Endothelial cell of umbilical vein (primary cell): ENCODE measurements at regions of chr22 and their contacts with region 1.

Region 1: DNA sequence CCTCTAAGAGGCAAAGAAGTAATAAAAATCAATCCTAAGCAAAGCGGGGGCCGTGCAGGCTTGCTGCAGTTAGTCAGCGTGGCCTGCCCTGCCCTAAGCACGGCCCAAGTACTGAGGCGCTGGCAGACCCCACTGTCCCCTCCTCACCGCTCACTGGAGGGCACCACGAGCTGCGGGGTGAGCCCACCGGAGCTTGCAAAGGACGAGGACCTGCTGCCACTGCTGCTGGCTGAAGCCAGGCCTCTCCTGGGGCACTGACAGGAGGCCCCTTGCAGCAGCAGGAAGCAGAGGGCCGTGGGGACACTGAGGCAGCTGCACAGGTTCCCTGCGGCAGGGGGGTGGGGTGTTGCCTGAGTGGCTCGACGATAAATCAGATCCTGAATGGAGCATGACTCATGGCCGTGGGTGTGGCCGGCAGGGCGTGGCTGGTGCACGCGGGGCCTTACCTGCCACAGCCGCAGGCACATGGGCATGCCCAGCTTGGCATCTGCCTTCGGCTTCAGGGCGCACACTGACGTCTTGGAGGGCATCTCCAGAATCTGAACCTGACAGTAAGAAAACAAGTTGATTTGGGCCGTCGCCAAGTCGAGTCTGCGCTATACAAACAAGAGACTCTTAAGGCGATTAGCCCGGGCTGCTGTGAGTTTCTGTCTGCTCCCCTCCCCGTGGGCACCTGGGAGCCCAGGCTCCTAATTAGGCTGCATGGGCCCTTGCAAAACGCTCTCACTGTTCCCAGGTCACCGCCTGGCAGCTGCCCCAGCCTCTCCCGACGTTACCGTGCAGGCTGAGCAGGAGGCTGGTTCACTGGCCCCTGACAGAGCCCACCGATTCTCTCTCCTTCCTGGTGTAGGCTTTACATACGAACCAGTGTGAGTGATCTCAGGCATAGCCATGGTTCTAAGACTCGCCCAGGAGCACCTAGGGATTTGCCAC is 45.9 kb downstream of the TBX1 start:
- DNase-seq: peak; percentile 63
- H3K4me3 ChIP-seq: no peak overlapping the region
- H3K27ac ChIP-seq: peak overlapping the region; percentile 28
- H3K4me1 ChIP-seq: peaks cover 14% of the 10 kb centered on the region
- H3K27me3 ChIP-seq: no peaks in the 10 kb centered on the region
- CTCF ChIP-seq: no peak
- POLR2A ChIP-seq: no peak

Region 2: DNA sequence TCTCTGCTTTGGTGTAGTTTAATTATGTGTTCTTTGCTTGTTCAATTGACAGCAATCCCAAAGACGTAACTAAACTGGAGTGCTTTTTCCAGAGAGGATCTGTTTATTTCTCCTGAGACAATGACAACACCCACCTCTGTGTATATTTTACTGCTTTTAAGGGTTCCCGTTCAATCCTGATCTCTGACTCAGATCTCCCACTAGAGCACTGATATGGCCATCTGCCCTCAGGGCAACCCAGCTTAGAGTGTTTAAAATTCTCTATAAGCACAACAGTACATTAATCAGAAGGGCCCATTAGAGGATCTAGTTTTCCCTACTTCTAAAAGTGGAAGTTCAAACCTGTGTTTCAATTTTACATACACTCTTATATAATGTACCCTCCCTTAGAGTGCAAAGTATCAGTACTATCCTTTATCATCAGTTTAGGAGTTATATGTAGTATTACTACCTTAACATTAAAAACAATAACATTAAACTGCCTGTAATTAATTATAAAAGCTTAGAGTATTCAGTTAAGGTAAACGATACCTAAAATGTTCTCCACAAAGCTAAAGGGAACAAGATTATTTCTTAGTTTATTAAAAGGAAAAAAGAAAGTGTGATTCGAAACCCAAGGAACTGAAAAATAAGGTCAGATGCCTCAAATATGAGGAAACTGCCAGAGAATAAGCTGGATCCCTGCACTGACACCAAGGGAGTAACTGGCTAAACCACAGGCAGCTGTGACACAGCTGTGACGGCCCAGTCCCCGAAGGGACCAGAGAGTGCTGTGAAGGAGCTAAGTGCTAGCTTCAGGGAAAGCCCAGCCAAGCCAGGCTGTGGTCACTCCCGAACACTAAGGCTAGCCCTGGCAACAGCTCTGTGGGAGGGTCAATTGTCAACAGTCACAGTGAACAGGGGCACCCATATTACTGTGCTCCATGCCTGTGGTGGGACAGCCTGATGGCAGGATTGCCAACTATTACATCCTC is 342.7 kb before region 1 on chr22:
- CTCF ChIA-PET with region 1: no interaction called
- POLR2A ChIA-PET with region 1: no interaction called
- dilution Hi-C with region 1: no loop called
- intact Hi-C with region 1: no loop called
- DNase-seq: no peak
- H3K4me3 ChIP-seq: no peak overlapping the region
- H3K27ac ChIP-seq: no peak overlapping the region
- H3K4me1 ChIP-seq: no peaks in the 10 kb centered on the region
- H3K27me3 ChIP-seq: no peaks in the 10 kb centered on the region
- CTCF ChIP-seq: no peak
- POLR2A ChIP-seq: no peak

Region 3: GRCh38 chr22:19554834-19555404 is 251.6 kb before region 1 on chr22:
- CTCF ChIA-PET with region 1: no interaction called
- POLR2A ChIA-PET with region 1: no interaction called
- dilution Hi-C with region 1: no loop called
- intact Hi-C with region 1: no loop called
- DNase-seq: peak; percentile 73
- H3K4me3 ChIP-seq: no peak overlapping the region
- H3K27ac ChIP-seq: no peak overlapping the region
- H3K4me1 ChIP-seq: peaks cover 7% of the 10 kb centered on the region
- H3K27me3 ChIP-seq: no peaks in the 10 kb centered on the region
- CTCF ChIP-seq: peak; percentile 13 to 34
- POLR2A ChIP-seq: no peak

Region 4: DNA sequence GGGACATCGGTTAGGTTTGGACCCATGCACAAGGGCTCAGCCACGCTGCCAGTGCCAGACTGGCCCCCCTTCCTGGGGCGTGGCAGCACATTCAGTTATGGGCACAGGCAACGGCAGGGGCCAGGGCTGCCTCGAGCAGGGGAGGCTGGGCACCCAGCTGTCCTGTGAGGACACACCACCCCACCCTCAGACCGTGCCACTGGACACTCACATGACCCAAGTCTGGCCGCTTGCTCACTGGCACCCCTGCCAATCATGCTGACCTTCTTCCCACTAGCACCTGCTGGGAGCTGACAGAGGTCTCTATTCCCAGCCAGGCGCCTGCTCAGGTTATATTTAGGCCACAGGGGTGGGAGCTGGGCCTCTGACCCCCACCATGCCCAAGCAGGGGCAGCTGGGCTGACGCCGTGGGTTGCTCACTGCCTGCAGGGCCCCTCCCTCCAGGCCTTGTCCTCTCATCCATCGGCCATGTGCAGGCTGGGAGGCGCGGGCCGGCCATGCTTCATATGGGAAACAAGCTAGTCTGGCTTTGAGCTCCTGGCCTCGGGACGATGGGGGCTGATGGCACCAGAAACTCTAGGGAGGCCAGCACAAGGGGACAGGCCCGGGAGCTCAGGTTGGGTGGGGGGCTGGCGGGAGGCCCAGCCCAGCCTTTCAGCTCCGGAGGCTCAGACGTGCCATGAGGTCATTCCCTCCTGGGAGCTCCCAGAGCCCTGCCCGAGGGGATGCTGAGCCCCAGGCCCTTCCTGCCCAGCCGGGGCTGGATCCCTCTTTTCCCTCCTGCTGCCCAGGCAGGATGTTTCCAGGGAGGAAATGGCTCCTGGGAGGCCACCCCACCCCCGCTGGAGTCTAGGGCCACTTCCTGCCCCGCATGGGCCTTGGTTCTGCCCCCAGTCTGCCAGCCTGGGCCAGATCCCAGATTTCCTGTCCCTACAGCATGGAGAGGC is 61.1 kb before region 1 on chr22:
- CTCF ChIA-PET with region 1: no interaction called
- POLR2A ChIA-PET with region 1: no interaction called
- dilution Hi-C with region 1: no loop called
- intact Hi-C with region 1: loop called (anchors 1 kb)
- DNase-seq: no peak
- H3K4me3 ChIP-seq: no peak overlapping the region
- H3K27ac ChIP-seq: no peak overlapping the region
- H3K4me1 ChIP-seq: peaks cover 9% of the 10 kb centered on the region
- H3K27me3 ChIP-seq: no peaks in the 10 kb centered on the region
- CTCF ChIP-seq: no peak
- POLR2A ChIP-seq: no peak

Region 5: GRCh38 chr22:19772422-19773324 is 33.8 kb before region 1 on chr22:
- CTCF ChIA-PET with region 1: no interaction called
- POLR2A ChIA-PET with region 1: no interaction called
- dilution Hi-C with region 1: no loop called
- intact Hi-C with region 1: loop called (anchors 2 kb)
- DNase-seq: peak; percentile 83
- H3K4me3 ChIP-seq: no peak overlapping the region
- H3K27ac ChIP-seq: no peak overlapping the region
- H3K4me1 ChIP-seq: peaks cover 12% of the 10 kb centered on the region
- H3K27me3 ChIP-seq: peaks cover 6 to 9% of the 10 kb centered on the region in 2 experiments
- CTCF ChIP-seq: peak; percentile 15 to 29
- POLR2A ChIP-seq: no peak

Region 6: DNA sequence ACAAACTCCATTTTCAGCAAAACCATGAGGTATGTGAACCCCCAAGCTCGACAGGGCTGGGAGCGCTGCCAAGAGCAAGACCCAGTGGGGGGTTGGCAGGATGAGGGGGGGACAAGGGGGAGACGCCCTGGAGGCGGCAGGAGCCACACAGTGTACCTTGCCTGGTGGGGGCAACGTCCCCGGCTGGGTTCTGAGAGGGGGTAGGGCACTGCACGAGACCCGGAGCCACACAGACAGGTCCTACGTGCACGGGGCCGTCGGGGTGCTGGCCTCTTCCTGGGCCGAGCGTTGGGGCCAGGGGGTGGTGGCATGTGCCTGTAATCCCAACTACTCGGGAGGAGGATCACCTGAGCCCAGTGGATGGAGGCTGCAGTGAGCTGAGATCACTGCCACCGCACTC is 17.1 kb before region 1 on chr22:
- CTCF ChIA-PET with region 1: no interaction called
- POLR2A ChIA-PET with region 1: no interaction called
- dilution Hi-C with region 1: no loop called
- intact Hi-C with region 1: no loop called
- DNase-seq: no peak
- H3K4me3 ChIP-seq: no peak overlapping the region
- H3K27ac ChIP-seq: no peak overlapping the region
- H3K4me1 ChIP-seq: no peaks in the 10 kb centered on the region
- H3K27me3 ChIP-seq: no peaks in the 10 kb centered on the region
- CTCF ChIP-seq: no peak
- POLR2A ChIP-seq: no peak

Region 7: DNA sequence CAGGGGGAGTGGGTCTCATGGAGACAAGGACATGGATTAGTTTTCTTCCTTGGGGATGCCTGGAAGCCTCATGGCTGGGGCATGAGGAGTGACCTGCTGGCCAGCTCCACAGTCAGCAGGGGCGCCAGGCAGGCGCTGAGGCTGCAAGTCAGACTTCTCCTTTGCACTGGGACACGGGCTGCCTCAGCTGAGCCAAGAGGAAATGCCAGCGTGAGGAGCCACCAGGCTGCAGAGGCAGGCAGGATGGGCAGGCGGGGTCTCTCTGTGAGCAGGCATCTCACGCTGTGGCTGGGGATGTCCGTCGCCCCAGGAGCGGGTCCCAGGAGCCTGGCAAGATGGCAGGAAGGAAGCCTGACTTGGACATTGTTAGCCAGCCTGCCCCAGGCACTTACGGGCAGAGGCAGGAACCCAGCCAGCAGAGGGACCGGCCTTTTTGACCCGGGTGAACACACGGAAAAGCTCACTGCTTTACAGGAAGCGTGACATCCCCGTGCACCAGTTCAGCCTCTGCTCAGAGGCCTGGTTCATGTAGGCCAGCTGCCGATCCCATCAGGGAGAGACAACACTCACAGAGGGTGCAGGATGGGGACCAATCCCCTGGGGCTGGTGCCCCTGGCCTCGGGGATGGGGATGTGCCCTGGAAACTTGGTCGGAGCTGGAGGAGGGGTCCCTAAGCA is 38.0 kb after region 1 on chr22:
- CTCF ChIA-PET with region 1: no interaction called
- POLR2A ChIA-PET with region 1: no interaction called
- dilution Hi-C with region 1: no loop called
- intact Hi-C with region 1: loop called (anchors 2 kb)
- DNase-seq: peak; percentile 77
- H3K4me3 ChIP-seq: no peak overlapping the region
- H3K27ac ChIP-seq: peak overlapping the region; percentile 80
- H3K4me1 ChIP-seq: peaks cover 32% of the 10 kb centered on the region
- H3K27me3 ChIP-seq: no peaks in the 10 kb centered on the region
- CTCF ChIP-seq: peak; percentile 17 to 39
- POLR2A ChIP-seq: no peak